ENCODE measurements at regions of chr5 and their contacts with region 1.

Region 1: DNA sequence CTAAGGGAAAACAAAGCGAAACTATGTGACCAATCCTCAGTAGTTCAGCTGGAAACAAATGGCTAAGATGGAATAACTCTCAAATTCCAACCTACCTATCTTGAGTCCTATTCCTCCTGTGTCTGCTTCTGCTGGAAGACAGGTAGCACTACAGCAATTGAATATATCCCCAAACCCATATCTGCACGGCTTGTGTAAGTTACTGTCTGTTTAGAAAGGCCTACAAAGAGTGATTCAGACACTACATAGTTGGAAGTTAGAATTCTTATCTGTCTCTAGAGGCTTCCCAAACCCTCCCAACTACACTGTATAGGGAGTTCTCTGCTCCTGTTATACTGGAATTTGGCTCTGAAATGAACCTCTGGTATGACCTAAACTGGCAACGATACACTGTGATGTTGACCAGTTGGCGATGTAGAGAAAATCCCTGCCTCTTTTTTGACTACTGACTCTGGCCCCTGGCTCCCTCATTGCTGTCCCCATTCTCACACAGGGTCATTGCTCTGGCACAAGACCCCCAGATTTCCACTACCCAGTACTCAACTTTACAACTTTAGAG is 22.6 kb upstream of the NADK2 start:
- DNase-seq: no peak
- ATAC-seq: no peak
- H3K4me3 ChIP-seq: no peak overlapping the region
- H3K27ac ChIP-seq: no peak overlapping the region
- H3K4me1 ChIP-seq: no peaks in the 10 kb centered on the region
- H3K27me3 ChIP-seq: no peaks in the 10 kb centered on the region
- CTCF ChIP-seq: no peak

Region 2: GRCh38 chr5:36357391-36357975 is 93.2 kb after region 1 on chr5:
- intact Hi-C with region 1: no loop called
- DNase-seq: no peak
- ATAC-seq: no peak
- H3K4me3 ChIP-seq: no peak overlapping the region
- H3K27ac ChIP-seq: no peak overlapping the region
- H3K4me1 ChIP-seq: no peaks in the 10 kb centered on the region
- H3K27me3 ChIP-seq: no peaks in the 10 kb centered on the region
- CTCF ChIP-seq: no peak

Region 3: GRCh38 chr5:36638056-36638455 is 373.8 kb after region 1 on chr5:
- intact Hi-C with region 1: no loop called
- DNase-seq: no peak
- ATAC-seq: no peak
- H3K4me3 ChIP-seq: no peak overlapping the region
- H3K27ac ChIP-seq: no peak overlapping the region
- H3K4me1 ChIP-seq: no peaks in the 10 kb centered on the region
- H3K27me3 ChIP-seq: no peaks in the 10 kb centered on the region
- CTCF ChIP-seq: no peak

Region 4: DNA sequence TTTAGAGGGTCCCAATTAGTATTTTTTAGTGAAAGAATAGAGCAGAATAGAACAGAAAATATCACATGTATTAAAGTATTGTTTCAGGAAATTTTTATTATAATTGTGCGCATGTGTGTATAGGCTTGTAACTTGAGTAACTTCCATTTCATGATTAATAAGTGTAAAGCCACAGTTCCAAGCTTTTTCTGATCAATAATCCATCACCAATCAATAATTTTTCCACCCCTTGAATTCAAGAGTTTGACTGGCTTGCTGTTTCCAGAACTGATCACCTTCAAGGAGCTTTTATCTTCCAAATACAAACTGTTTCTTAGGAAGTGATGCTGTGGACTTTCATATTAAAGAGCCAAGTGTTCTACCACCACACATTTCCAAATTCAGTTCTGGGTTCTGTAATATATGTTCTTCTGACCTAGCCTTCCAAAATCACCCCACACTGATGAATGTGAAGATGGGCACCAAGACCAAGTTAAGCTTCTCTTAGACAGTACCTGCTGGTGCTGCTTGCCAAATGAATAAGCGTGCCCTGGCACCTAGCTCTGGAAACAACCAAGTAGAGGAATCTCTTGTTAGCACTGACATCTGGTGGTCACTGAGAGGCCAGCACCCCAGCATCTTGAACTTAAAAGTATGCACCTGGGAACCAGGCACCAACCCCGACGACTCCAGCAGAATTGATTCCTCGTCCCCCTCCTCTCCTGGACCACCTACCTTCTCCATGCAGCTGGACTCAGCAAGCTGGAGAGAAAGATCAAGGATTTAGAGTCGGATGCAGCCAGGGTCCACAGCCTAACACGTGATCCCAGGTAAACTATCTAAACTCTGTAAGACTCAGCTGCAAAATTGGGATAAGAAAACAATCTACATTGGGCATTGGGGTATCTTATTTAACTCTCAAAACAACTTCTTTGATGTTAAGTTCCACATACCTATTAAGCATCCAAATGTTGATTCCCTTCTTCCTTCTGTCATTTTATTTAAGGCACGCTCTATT is 431.7 kb after region 1 on chr5:
- intact Hi-C with region 1: loop called (anchors 5 to 10 kb)
- DNase-seq: peak; percentile 32 to 66
- ATAC-seq: peak; percentile 55 to 70 (median 64)
- H3K4me3 ChIP-seq: no peak overlapping the region
- H3K27ac ChIP-seq: no peak overlapping the region
- H3K4me1 ChIP-seq: no peaks in the 10 kb centered on the region
- H3K27me3 ChIP-seq: no peaks in the 10 kb centered on the region
- CTCF ChIP-seq: peak; percentile 58

Measured in psoas muscle (tissue), 8 donors.